PC-3 (cell line): ENCODE measurements at regions of chr3 and their contacts with region 1.

Region 1: DNA sequence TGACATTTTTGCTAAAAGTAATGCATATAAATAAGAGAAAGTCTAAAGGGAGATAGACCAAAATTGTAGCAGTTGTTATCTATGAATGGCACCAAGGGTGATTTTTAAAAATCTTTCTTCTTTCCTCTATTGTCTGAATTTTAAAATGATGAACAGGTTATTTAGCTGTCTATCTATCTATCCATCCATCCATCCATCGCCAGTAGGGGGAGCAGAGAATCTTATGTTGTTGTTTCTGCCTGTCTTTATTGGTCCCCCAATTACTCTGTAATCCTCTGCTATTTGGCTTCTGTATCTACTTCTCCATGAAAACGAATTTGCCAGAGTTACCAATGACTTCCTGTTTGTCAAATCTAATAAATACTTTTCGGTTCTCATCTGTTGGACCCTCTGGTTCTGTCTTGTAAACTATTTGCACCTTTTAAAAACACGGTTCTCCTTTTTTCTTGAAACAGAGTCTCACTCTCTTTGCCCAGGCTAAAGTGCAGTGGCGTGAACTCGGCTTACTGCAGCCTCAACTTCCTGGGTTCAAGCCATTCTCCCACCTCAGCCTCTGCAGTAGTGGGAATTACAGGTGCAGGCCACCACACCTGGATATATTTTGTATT is 86.0 kb downstream of the ECT2 start:
- DNase-seq: peak; percentile 63
- ATAC-seq: peak; percentile 88
- H3K4me3 ChIP-seq: no peak overlapping the region
- H3K27ac ChIP-seq: no peak overlapping the region
- H3K4me1 ChIP-seq: no peaks in the 10 kb centered on the region
- H3K27me3 ChIP-seq: peaks cover 31% of the 10 kb centered on the region
- CTCF ChIP-seq: peak; percentile 90

Region 2: DNA sequence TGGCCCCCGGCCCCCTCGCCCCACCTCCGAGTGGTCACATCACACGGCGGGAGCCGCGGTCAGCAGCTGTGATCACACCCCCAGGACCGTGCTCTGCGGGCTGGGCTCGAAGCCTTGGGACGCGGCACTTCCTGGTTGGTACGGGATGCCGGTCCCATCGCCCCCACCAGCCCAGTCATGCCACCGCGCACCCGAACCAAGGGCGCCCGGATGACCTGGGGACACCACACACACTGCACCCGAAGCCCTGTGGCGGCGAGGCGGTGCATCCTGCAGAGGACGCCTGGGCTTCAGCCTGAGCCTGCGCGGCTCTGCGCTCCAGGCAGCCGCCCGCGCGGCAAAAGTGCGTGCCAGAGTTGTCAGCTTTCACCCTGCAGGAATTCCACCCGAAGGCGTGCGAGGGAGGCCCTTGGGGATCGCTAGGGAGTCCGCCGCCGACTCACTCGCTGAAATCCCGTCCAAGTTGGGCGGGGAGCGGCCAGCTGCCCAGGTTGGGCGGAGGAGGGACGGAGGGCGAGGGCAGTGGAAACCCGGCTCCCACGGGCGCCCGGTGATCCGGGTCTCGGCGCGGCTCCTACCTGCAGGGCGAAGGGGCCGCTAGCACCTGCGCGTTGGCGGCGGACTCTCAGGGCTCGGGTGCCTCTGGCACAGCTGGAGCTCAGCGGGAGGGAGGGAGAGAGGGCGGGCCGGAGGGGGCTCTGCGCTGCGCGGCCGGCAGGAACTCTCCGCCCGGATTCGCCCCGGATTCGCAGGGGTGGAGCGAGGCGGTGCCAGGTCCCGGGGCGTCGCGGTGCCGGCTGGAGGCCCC is 1026.5 kb before region 1 on chr3 and contains the start of gene PLD1:
- CTCF ChIA-PET with region 1: no interaction called
- POLR2A ChIA-PET with region 1: no interaction called
- intact Hi-C with region 1: no loop called
- DNase-seq: peak; percentile 80
- ATAC-seq: peak; percentile 59
- H3K4me3 ChIP-seq: peak within 1 kb of the TSS; percentile 78
- H3K27ac ChIP-seq: peak within 1 kb of the TSS; percentile 90
- H3K4me1 ChIP-seq: peaks cover 50% of the 10 kb centered on the region
- H3K27me3 ChIP-seq: no peaks in the 10 kb centered on the region
- CTCF ChIP-seq: no peak
- total RNA-seq, gene PLD1: 7.3 and 8.3 TPM in 2 replicates

Region 3: DNA sequence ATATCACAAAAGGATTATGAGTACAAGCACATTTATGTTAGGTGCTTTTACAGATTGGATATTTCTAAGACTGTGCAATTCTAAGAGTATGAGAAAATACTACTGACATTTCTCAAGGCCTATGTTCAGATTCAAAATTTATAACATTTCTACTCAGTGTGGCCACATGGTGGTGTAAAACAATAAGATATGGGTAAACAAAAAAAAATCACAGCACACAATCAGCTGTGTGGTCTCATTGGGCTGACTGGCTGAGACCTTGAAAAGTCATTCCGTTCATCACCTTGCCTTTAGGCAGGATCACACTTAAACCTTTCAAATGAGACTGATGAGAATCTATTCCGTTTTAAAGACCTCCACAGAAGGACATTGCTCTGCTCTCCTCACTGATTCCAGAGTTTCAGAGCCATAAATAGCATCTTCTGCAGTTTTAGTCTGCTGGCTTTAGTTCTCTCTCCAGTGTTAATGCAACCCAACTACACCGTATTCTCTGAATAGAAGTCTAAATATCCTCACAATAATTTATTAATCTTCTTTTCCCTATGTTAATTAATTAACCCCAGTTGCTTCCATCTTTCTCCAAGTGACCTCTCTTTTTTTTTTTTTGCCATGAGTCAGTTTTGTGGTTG is 146.4 kb after region 1 on chr3:
- CTCF ChIA-PET with region 1: no interaction called
- POLR2A ChIA-PET with region 1: no interaction called
- intact Hi-C with region 1: loop called (anchors 10 kb)
- DNase-seq: peak; percentile 18
- ATAC-seq: peak; percentile 57; the same call in 1 of the 2 replicates
- H3K4me3 ChIP-seq: no peak overlapping the region
- H3K27ac ChIP-seq: no peak overlapping the region
- H3K4me1 ChIP-seq: no peaks in the 10 kb centered on the region
- H3K27me3 ChIP-seq: peaks cover 20% of the 10 kb centered on the region; the same call in 1 of the 2 replicates
- CTCF ChIP-seq: peak; percentile 54

Region 4: DNA sequence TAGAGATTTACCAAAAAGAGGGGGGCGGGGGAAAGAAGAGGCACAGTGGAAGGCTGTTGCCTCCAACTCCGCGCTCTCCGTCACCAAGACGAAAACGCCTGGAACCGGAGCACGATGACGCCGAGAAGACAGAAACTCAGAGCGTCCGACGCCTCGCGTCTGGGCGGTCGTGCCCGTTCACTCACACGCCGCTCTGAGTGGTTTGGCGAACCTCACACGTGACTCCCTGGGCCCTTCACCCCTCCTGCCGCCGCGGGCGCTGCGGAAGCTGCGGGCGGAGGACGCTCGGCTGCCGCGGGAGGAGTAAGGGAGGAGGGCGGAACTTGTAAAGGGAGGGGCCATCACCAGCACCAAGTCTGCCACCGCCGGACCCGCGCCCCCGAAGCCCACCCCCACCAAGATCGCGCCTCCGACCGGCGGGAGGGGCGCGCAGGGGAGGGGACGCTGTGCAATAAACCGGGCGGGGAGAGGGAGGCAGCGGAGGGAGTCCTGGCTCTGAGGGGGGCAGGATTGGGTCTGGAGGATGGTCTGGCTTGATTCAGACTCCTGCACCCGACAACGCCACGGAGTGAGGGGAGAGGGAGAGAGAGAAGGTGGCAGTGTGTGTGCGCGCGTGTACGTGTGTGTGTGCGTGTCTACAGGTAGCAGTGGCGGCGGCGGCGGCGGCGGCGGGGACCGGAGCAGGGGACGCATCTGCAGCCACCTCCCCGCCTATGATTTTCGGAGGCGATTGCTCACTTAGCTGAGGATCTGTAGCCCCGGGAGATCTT is 559.1 kb after region 1 on chr3:
- CTCF ChIA-PET with region 1: no interaction called
- POLR2A ChIA-PET with region 1: no interaction called
- intact Hi-C with region 1: loop called (anchors 10 kb)
- DNase-seq: peak; percentile 68
- ATAC-seq: peak; percentile 70
- H3K4me3 ChIP-seq: peak overlapping the region; percentile 69
- H3K27ac ChIP-seq: peak overlapping the region; percentile 19; the same call in 1 of the 2 replicates
- H3K4me1 ChIP-seq: peaks cover 14% of the 10 kb centered on the region; the same call in 1 of the 2 replicates
- H3K27me3 ChIP-seq: peaks cover 74% of the 10 kb centered on the region
- CTCF ChIP-seq: no peak